ENCODE measurements at regions of chr2 and their contacts with region 1.

Region 1: DNA sequence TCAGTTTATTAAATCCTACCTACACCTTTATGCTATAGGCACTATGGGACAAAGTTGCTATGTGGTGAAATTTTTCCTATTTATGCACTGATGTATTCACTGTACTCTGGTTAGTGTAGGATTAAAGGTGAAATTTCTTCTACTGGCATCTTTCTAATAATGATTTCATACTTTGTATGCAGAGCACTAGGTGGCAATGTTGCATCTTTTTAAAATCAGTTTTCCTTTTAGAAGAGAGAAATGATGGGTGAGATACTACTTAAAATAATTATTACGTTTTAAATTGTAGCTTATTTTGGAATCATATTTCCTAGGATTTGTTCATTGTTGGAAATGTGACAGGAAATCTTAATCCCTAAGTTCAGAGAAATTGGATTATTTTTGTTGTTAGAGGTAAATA is 150.9 kb downstream of the CD8B2 start:
- DNase-seq: no peak
- H3K4me3 ChIP-seq: no peak overlapping the region
- H3K4me3 Mint-ChIP-seq: no peak overlapping the region
- H3K27ac Mint-ChIP-seq: no peak overlapping the region
- H3K4me1 ChIP-seq: no peaks in the 10 kb centered on the region
- H3K4me1 Mint-ChIP-seq: no peaks in the 10 kb centered on the region
- H3K27me3 ChIP-seq: no peaks in the 10 kb centered on the region
- H3K27me3 Mint-ChIP-seq: peaks cover 3% of the 10 kb centered on the region
- CTCF ChIP-seq: peak in 1 of 2 experiments; percentile 45

Region 2: GRCh38 chr2:105961599-105962146 is 676.4 kb before region 1 on chr2:
- CTCF ChIA-PET with region 1: no interaction called
- POLR2A ChIA-PET with region 1: no interaction called
- intact Hi-C with region 1: no loop called
- DNase-seq: no peak
- H3K4me3 ChIP-seq: no peak overlapping the region
- H3K4me3 Mint-ChIP-seq: no peak overlapping the region
- H3K27ac Mint-ChIP-seq: no peak overlapping the region
- H3K4me1 ChIP-seq: no peaks in the 10 kb centered on the region
- H3K4me1 Mint-ChIP-seq: peaks cover 6% of the 10 kb centered on the region
- H3K27me3 ChIP-seq: no peaks in the 10 kb centered on the region
- H3K27me3 Mint-ChIP-seq: no peaks in the 10 kb centered on the region
- CTCF ChIP-seq: no peak

Region 3: GRCh38 chr2:106734165-106734564 is 96.1 kb after region 1 on chr2:
- CTCF ChIA-PET with region 1: no interaction called
- POLR2A ChIA-PET with region 1: no interaction called
- intact Hi-C with region 1: no loop called
- DNase-seq: no peak
- H3K4me3 ChIP-seq: no peak overlapping the region
- H3K4me3 Mint-ChIP-seq: no peak overlapping the region
- H3K27ac Mint-ChIP-seq: no peak overlapping the region
- H3K4me1 ChIP-seq: no peaks in the 10 kb centered on the region
- H3K4me1 Mint-ChIP-seq: no peaks in the 10 kb centered on the region
- H3K27me3 ChIP-seq: no peaks in the 10 kb centered on the region; the same call in 1 of the 2 replicates
- H3K27me3 Mint-ChIP-seq: peaks cover 8% of the 10 kb centered on the region
- CTCF ChIP-seq: no peak

Region 4: DNA sequence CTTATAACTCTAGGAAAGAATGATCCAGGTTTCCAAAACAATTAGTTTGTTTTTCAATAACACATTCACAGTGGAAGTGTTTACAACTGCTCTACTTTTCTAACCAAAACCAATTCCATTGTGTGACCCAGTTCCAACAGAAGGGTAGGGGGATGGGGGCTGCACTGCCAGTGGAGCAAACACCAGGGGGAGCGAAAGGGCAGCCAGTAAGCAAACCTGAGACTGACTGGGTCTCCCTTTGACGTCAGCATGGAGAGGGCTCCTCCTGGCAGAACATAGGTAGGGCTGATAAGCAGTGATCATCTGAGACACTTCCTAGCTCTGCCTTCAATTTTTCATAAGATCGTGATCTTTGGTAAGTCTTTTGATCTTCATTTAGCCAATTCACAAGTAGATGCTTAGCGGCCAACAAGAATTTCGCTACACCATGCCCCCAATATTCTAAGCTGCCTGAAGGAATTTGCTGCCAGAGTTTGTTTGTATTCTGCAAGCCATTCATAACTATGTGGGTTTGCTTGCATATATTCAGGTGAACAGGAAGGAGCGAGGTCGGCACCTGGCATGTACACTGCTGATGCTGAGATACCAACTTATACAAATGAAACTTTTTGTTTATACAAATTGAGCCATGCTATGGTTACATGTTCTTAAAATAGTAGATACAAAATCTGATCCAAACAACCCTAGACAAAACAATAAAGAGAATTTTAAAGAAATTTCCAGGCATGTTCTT is 202.0 kb after region 1 on chr2:
- CTCF ChIA-PET with region 1: no interaction called
- POLR2A ChIA-PET with region 1: no interaction called
- intact Hi-C with region 1: loop called (anchors 10 kb)
- DNase-seq: peak; percentile 43 to 51
- H3K4me3 ChIP-seq: no peak overlapping the region
- H3K4me3 Mint-ChIP-seq: no peak overlapping the region
- H3K27ac Mint-ChIP-seq: no peak overlapping the region
- H3K4me1 ChIP-seq: no peaks in the 10 kb centered on the region
- H3K4me1 Mint-ChIP-seq: no peaks in the 10 kb centered on the region
- H3K27me3 ChIP-seq: no peaks in the 10 kb centered on the region; the same call in 1 of the 2 replicates
- H3K27me3 Mint-ChIP-seq: peaks cover 6% of the 10 kb centered on the region
- CTCF ChIP-seq: peak; percentile 41 to 53

Region 5: GRCh38 chr2:108194409-108195132 is 1556.5 kb after region 1 on chr2:
- CTCF ChIA-PET with region 1: no interaction called
- POLR2A ChIA-PET with region 1: no interaction called
- intact Hi-C with region 1: loop called (anchors 5 kb)
- DNase-seq: no peak
- H3K4me3 ChIP-seq: no peak overlapping the region
- H3K4me3 Mint-ChIP-seq: no peak overlapping the region
- H3K27ac Mint-ChIP-seq: peak overlapping the region; percentile 16
- H3K4me1 ChIP-seq: peaks cover 8% of the 10 kb centered on the region
- H3K4me1 Mint-ChIP-seq: peaks cover 16% of the 10 kb centered on the region
- H3K27me3 ChIP-seq: no peaks in the 10 kb centered on the region
- H3K27me3 Mint-ChIP-seq: no peaks in the 10 kb centered on the region
- CTCF ChIP-seq: peak; percentile 16 to 20

Measured in Caco-2 (cell line).